Activated naive CD4-positive, alpha-beta T cell treated with anti-CD3 and anti-CD28 coated beads for 36 hours (primary cell): ENCODE measurements at regions of chr21 and their contacts with region 1.

Region 1: GRCh38 chr21:38805328-38806152 is at the start of gene ETS2:
- DNase-seq: peak; percentile 84
- H3K4me3 Mint-ChIP-seq: peak within 1 kb of the TSS; percentile 90
- H3K27ac Mint-ChIP-seq: peak within 1 kb of the TSS; percentile 91
- H3K4me1 Mint-ChIP-seq: peaks cover 33% of the 10 kb centered on the region
- H3K27me3 Mint-ChIP-seq: no peaks in the 10 kb centered on the region
- total RNA-seq, gene ETS2: 22.4 to 25.6 TPM

Region 2: GRCh38 chr21:38780879-38781278 is 24.7 kb before region 1 on chr21:
- CTCF ChIA-PET with region 1: interaction called, 3 read pairs
- intact Hi-C with region 1: loop called (anchors 1 kb)
- DNase-seq: peak; percentile 33
- H3K4me3 Mint-ChIP-seq: no peak overlapping the region
- H3K27ac Mint-ChIP-seq: peak overlapping the region; percentile 39
- H3K4me1 Mint-ChIP-seq: peaks cover 27% of the 10 kb centered on the region
- H3K27me3 Mint-ChIP-seq: peaks cover 2% of the 10 kb centered on the region

Region 3: DNA sequence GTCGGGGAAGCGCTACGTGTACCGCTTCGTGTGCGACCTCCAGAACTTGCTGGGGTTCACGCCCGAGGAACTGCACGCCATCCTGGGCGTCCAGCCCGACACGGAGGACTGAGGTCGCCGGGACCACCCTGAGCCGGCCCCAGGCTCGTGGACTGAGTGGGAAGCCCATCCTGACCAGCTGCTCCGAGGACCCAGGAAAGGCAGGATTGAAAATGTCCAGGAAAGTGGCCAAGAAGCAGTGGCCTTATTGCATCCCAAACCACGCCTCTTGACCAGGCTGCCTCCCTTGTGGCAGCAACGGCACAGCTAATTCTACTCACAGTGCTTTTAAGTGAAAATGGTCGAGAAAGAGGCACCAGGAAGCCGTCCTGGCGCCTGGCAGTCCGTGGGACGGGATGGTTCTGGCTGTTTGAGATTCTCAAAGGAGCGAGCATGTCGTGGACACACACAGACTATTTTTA is 17.3 kb after region 1 on chr21:
- CTCF ChIA-PET with region 1: no interaction called
- intact Hi-C with region 1: loop called (anchors 1 kb)
- DNase-seq: no peak
- H3K4me3 Mint-ChIP-seq: no peak overlapping the region
- H3K27ac Mint-ChIP-seq: no peak overlapping the region
- H3K4me1 Mint-ChIP-seq: no peaks in the 10 kb centered on the region
- H3K27me3 Mint-ChIP-seq: no peaks in the 10 kb centered on the region

Region 4: GRCh38 chr21:38831526-38832467 is 26.3 kb after region 1 on chr21:
- CTCF ChIA-PET with region 1: interaction called, 3 read pairs
- intact Hi-C with region 1: loop called (anchors 1 kb)
- DNase-seq: peak; percentile 87
- H3K4me3 Mint-ChIP-seq: no peak overlapping the region
- H3K27ac Mint-ChIP-seq: peak overlapping the region; percentile 75
- H3K4me1 Mint-ChIP-seq: peaks cover 17% of the 10 kb centered on the region
- H3K27me3 Mint-ChIP-seq: no peaks in the 10 kb centered on the region

Region 5: GRCh38 chr21:38869946-38870345 is 64.4 kb after region 1 on chr21:
- CTCF ChIA-PET with region 1: no interaction called
- intact Hi-C with region 1: no loop called
- DNase-seq: no peak
- H3K4me3 Mint-ChIP-seq: no peak overlapping the region
- H3K27ac Mint-ChIP-seq: no peak overlapping the region
- H3K4me1 Mint-ChIP-seq: no peaks in the 10 kb centered on the region
- H3K27me3 Mint-ChIP-seq: peaks cover 14% of the 10 kb centered on the region

Region 6: DNA sequence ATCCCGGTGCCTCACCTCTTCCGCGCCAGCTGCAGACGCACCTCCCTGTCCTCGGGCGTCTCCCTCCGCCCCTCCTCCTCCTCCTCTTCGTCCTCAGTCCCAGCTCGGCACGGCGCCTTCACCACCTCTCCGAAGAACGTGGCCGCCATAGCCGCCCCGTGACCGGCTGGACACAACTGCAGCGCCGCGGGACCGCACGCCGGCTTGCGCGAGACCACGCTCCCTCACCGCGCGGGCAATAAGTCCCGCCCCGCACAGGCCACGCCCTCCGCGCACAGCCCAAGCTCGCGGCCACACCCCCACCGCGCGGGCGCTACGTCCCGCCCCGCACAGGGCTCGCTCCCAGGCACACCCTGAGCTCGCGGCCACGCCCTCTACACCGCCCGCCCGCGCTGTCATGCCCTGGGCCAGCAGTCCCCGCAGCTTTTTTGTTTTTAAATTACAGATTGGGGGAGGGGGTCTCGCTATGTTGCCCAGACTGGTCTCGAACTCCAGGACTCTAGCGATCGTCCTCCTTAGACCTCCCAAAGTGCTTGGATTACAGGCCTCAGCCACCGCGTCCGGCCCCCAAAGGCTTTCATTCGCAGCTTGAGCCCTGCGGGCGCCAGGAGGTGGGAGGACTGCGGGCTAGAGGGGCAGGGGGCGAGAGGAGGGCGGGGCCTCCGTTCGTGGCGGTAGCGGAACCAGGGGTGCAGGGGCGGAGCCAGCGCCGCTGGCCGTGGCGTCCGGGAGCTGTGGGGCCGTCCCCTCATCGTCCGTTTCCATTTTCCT is 377.9 kb after region 1 on chr21 and contains the start of gene PSMG1:
- CTCF ChIA-PET with region 1: no interaction called
- intact Hi-C with region 1: loop called (anchors 1 kb)
- DNase-seq: peak; percentile 94
- H3K4me3 Mint-ChIP-seq: peak within 1 kb of the TSS; percentile 92
- H3K27ac Mint-ChIP-seq: peak within 1 kb of the TSS; percentile 90
- H3K4me1 Mint-ChIP-seq: peaks cover 62% of the 10 kb centered on the region
- H3K27me3 Mint-ChIP-seq: no peaks in the 10 kb centered on the region
- total RNA-seq, gene PSMG1: 70.8 to 70.9 TPM

Region 7: DNA sequence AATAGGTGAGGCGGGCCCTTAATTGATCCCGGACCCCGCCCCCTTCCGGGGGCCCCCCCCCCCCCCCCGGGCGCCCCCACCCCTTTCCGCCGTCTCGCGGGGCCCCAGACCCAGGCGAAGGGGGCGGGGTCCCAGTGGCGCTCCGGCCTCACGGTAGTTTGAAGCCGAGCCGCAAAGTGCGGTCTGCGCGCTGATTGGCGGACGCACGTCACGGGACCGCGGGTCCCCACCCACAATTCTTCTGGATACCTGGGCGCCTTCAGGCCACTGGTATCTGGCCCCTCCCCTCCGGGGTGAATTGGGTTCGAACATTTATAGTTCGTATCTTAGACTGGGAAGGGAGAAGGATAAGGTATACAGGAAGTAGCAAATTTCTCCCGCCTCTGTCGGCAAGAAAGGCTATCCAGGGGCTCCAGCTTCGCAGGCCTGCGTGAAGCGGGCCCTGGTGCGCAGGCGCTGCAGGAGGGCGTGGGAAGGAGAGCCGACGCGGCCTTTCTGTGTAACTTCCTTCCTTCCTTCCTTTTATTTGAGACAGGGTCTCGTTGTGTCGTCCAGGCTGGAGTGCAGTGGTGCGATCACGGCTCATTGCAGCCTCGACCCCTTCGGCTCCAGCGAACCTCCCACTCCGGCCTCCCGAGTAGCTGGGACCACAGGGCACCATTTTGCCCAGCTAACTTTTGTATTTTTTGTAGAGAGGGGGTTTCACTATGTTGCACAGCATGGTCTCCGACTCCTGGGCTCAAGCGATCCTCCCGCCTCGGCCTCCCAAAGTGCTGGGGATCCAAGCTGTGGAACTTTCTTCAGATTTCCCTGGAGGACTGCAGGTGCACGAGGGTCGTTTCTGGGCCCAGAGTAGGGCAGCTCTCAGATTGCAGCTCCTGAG is 543.9 kb after region 1 on chr21:
- CTCF ChIA-PET with region 1: no interaction called
- intact Hi-C with region 1: loop called (anchors 1 kb)
- DNase-seq: peak; percentile 98
- H3K4me3 Mint-ChIP-seq: peak overlapping the region; percentile 99
- H3K27ac Mint-ChIP-seq: peak overlapping the region; percentile 99
- H3K4me1 Mint-ChIP-seq: peaks cover 32% of the 10 kb centered on the region
- H3K27me3 Mint-ChIP-seq: no peaks in the 10 kb centered on the region